Spleen (tissue), 13 donors: ENCODE measurements at regions of chr17 and their contacts with region 1.

Region 1: GRCh38 chr17:38667099-38667786 is 7.5 kb downstream of the EPOP start:
- DNase-seq: peak; percentile 84
- H3K4me3 ChIP-seq: no peak overlapping the region
- H3K27ac ChIP-seq: no peak overlapping the region
- H3K4me1 ChIP-seq: peaks cover 0 to 13% (median 0%) of the 10 kb centered on the region in 6 donors
- H3K27me3 ChIP-seq: peaks cover 0 to 95% (median 42%) of the 10 kb centered on the region in 7 donors
- CTCF ChIP-seq: peak; percentile 89 to 96 (median 95)
- POLR2A ChIP-seq: no peak

Region 2: DNA sequence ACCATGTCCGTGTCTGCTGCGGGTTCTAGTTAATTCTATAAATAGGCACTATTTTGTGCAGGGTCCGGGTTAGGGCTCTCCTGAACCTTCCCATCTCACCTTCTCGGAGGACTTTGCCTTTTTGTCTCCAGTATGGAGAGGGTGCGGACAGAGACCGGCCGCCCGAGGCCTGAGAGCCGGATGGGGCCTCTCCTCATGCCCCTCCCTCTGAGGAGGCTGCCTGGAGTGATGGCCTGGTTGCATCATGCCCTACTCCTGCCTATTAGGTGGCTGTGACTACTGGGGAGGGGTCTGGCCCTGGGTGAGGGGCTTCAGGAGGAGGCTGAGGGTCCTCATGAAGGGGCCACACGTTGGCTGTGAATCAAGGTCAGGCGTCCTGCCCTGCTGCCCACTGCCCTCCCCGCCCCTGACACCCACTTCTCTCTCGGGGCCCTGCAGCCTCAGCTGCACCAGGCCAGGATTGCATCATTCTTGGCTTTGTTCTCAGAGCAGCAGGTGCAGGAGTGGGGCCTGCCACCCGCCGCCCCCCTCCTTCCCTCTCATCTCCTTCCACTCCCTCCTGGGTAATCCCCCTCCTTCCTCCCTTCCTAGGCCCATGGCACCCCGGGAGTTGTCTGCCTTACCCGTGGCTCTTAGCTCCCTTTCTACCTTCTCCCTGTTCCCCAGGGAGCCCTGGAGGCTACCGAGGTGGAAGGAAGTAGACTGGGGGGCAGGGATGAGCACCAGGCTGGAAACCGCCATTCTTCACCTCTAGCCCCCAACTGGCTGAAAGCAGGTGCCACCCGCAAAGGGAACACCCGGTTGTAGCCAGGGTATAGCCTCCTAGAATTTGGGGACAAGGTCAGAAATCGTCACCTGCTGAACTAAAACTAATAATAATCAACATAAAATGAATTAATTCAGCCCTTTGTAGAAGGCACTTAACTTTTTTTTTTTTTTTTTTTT is 251.7 kb before region 1 on chr17:
- intact Hi-C with region 1: no loop called
- DNase-seq: no peak
- H3K4me3 ChIP-seq: no peak overlapping the region
- H3K27ac ChIP-seq: peak overlapping the region in 1 of 8 donors; percentile 10
- H3K4me1 ChIP-seq: peaks cover 5 to 56% (median 33%) of the 10 kb centered on the region in 6 donors
- H3K27me3 ChIP-seq: peaks cover 0 to 57% (median 21%) of the 10 kb centered on the region in 7 donors
- CTCF ChIP-seq: no peak
- POLR2A ChIP-seq: no peak

Region 3: GRCh38 chr17:38444151-38444550 is 223.1 kb before region 1 on chr17:
- intact Hi-C with region 1: no loop called
- DNase-seq: peak; percentile 89
- H3K4me3 ChIP-seq: peak overlapping the region in 2 of 8 donors; percentile 6 to 21
- H3K27ac ChIP-seq: peak overlapping the region in 4 of 8 donors; percentile 14 to 40 (median 34)
- H3K4me1 ChIP-seq: peaks cover 29 to 97% (median 56%) of the 10 kb centered on the region in 6 donors
- H3K27me3 ChIP-seq: peaks cover 0 to 8% (median 0%) of the 10 kb centered on the region in 7 donors
- CTCF ChIP-seq: peak; percentile 67 to 91 (median 84)
- POLR2A ChIP-seq: no peak

Region 4: DNA sequence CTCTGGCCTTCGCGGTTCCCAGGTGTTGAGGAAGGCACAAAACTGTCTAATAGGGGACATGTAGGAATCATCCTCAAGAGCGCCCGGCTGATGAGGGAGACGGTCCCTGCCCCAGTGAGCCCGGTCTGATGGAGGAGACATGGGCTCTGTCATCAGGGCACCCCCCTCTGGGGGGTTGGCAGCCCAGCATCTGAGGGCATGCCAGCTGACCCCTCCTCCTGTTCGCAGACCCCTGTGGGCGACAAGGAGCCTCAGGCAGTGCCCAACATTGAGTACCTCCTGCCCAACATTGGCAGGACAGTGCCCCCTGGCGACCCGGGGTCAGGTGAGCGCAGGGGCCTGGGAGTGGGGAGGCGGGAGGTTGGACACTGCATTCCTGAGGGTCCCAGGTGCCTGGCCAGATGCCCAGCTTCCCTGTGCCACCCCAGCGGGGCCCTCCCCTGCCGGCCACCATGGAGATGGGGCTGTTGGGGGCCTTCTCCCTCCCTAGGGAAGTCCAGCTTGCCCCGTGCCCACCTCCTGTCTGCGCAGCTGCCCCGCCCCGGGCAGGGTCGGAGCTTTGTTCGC is 169.0 kb before region 1 on chr17:
- intact Hi-C with region 1: loop called (anchors 10 kb)
- DNase-seq: no peak
- H3K4me3 ChIP-seq: no peak overlapping the region
- H3K27ac ChIP-seq: no peak overlapping the region
- H3K4me1 ChIP-seq: no peaks in the 10 kb centered on the region
- H3K27me3 ChIP-seq: no peaks in the 10 kb centered on the region
- CTCF ChIP-seq: no peak
- POLR2A ChIP-seq: no peak

Region 5: DNA sequence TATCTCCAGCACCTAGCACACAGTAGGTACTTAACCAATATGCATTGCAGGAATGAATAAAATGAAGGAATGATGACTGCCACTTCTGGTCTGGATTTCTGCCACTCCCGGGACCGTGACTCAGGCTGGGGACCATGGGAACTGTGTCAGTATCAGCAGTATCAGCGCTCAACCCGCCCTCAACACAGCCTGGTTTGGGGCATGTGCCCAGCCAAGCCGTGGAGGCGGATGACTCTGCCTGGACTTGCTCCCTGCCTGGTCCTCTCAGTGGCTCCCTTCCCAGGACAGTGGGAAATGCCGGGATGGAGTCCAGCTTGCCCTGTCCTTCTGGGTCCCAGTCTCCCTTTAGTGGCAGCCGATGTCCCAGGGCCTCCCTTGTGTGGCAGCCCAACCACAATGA is 116.6 kb before region 1 on chr17:
- intact Hi-C with region 1: no loop called
- DNase-seq: no peak
- H3K4me3 ChIP-seq: no peak overlapping the region
- H3K27ac ChIP-seq: no peak overlapping the region
- H3K4me1 ChIP-seq: no peaks in the 10 kb centered on the region
- H3K27me3 ChIP-seq: peaks cover 0 to 68% (median 6%) of the 10 kb centered on the region in 7 donors
- CTCF ChIP-seq: no peak
- POLR2A ChIP-seq: no peak

Region 6: GRCh38 chr17:38560508-38561318 is 106.5 kb before region 1 on chr17:
- intact Hi-C with region 1: loop called (anchors 10 kb)
- DNase-seq: no peak
- H3K4me3 ChIP-seq: no peak overlapping the region
- H3K27ac ChIP-seq: no peak overlapping the region
- H3K4me1 ChIP-seq: peaks cover 23 to 79% (median 56%) of the 10 kb centered on the region in 6 donors
- H3K27me3 ChIP-seq: peaks cover 0 to 75% (median 63%) of the 10 kb centered on the region in 7 donors
- CTCF ChIP-seq: no peak
- POLR2A ChIP-seq: no peak